ENCODE measurements at regions of chr14 and their contacts with region 1.

Region 1: DNA sequence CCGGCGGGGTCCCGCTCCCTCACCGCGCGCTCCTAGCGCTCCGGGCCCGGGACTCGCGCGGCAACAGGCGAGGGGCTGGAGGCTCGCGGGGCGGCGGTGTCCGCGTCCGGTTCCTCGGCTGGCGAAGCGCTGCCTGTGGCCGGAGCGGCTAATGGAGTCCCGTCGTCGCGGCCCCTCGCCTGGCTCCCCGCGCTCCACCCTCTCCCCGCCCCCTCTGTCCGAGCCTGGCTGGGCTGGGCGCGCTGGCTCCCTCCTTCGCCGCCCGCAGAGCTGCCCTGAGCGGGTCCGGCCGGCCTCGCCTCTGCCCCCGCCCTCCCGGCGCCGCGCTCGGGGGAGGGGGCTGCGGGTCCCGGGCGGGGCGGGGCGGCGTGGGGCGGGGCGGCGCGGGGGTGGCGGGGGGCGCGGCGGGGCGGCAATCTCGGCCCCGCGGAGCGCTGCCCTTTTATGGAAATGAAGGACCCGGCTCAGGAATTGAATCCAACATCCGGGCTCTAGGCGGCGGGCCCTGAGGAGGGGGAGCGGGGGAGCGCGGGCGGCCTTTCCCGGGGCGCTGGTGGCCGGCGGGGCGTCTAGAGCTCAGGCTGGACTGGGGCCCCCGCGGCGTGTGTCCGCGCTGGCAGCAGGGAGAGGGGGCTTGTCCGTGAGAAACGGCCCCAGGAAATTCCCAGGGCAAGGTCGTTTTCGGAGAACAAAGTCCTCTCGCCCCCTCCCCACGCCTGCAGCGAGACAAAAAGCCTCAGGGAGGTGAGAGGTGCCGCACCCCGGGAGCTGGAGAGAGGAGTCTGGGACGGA is at the start of gene FERMT2:
- DNase-seq: no peak
- H3K4me3 ChIP-seq: peak within 1 kb of the TSS; percentile 99
- CTCF ChIP-seq: no peak

Region 2: GRCh38 chr14:52961060-52961639 is 10.1 kb after region 1 on chr14:
- CTCF ChIA-PET with region 1: interaction called, 31 read pairs
- POLR2A ChIA-PET with region 1: interaction called, 3 read pairs
- DNase-seq: no peak
- H3K4me3 ChIP-seq: no peak overlapping the region
- CTCF ChIP-seq: peak; percentile 48

Region 3: GRCh38 chr14:52974406-52974805 is 23.3 kb after region 1 on chr14:
- CTCF ChIA-PET with region 1: no interaction called
- POLR2A ChIA-PET with region 1: no interaction called
- DNase-seq: no peak
- H3K4me3 ChIP-seq: no peak overlapping the region
- CTCF ChIP-seq: no peak

Region 4: GRCh38 chr14:52998376-52999015 is 47.4 kb after region 1 on chr14:
- CTCF ChIA-PET with region 1: no interaction called
- POLR2A ChIA-PET with region 1: no interaction called
- DNase-seq: peak; percentile 45
- H3K4me3 ChIP-seq: no peak overlapping the region
- CTCF ChIP-seq: no peak